CD4-positive, alpha-beta T cell (primary cell): ENCODE measurements at regions of chr10 and their contacts with region 1.

Region 1: GRCh38 chr10:22655311-22655981 is 58.9 kb downstream of the PIP4K2A start:
- DNase-seq: peak in 12 of 14 experiments; percentile 17 to 81 (median 51)
- ATAC-seq: peak; percentile 74
- H3K4me3 ChIP-seq: peak overlapping the region; percentile 27
- H3K4me3 Mint-ChIP-seq: peak overlapping the region; percentile 82
- H3K27ac ChIP-seq: peak overlapping the region; percentile 58 to 67
- H3K27ac Mint-ChIP-seq: peak overlapping the region; percentile 91
- H3K4me1 ChIP-seq: peaks cover 92% of the 10 kb centered on the region
- H3K4me1 Mint-ChIP-seq: peaks cover 96% of the 10 kb centered on the region
- H3K27me3 ChIP-seq: no peaks in the 10 kb centered on the region
- H3K27me3 Mint-ChIP-seq: no peaks in the 10 kb centered on the region
- CTCF ChIP-seq: no peak

Region 2: GRCh38 chr10:22624289-22624738 is 31.1 kb before region 1 on chr10:
- CTCF ChIA-PET with region 1: interaction called, 5 read pairs
- POLR2A ChIA-PET with region 1: interaction called, 24 read pairs
- intact Hi-C with region 1: no loop called
- DNase-seq: no peak
- ATAC-seq: peak; percentile 64
- H3K4me3 ChIP-seq: no peak overlapping the region
- H3K4me3 Mint-ChIP-seq: peak overlapping the region; percentile 55
- H3K27ac ChIP-seq: peak overlapping the region in 1 of 2 donors; percentile 62
- H3K27ac Mint-ChIP-seq: peak overlapping the region; percentile 90
- H3K4me1 ChIP-seq: peaks cover 66% of the 10 kb centered on the region
- H3K4me1 Mint-ChIP-seq: peaks cover 98% of the 10 kb centered on the region
- H3K27me3 ChIP-seq: no peaks in the 10 kb centered on the region
- H3K27me3 Mint-ChIP-seq: no peaks in the 10 kb centered on the region
- CTCF ChIP-seq: no peak

Region 3: DNA sequence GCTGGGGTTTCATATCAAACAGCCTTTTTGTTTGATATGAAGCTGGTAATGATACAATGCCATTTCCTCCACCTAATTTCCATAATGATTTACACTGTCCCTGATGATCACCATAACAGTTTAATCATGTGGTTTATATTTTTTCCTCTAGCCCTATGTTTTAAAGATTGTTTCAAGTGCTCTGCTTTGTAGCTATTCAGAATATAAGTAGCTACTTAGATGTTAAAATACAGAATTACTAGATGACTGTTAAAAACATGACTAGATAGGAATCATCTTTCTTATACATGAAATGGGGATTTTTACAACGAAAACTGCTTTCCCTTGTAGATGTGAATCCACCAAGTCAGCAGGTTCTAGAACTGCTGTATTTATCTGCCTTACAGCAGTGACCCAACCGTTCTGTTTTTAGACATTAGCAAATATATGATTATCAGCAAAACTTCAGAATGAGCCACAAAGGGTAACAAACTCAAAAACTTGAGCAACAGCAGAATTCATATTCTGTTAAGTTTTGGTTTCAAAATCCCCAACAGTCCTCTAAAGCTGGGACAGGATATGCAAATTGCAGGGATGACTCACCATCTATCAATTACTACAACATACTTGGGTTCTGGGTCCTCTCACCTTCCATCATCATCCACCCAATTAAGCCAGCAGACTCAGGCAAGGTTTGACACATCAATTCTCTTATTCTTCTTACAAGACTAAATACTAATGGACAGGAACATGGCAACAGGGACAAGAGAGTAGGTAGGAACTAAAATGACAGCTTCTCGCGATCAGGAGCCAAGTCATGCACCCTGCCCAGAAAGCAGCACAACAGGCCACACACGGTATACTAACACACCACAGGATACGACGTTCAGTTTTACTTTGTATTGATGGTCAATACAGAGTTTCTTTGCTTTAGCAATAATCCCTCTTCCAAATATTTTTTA is 24.9 kb before region 1 on chr10:
- CTCF ChIA-PET with region 1: interaction called, 5 read pairs
- POLR2A ChIA-PET with region 1: interaction called, 24 read pairs
- intact Hi-C with region 1: loop called in 1 of 2 experiments (anchors 1 kb)
- DNase-seq: peak in 4 of 14 experiments; percentile 55 to 89 (median 86)
- ATAC-seq: peak; percentile 87
- H3K4me3 ChIP-seq: peak overlapping the region; percentile 42
- H3K4me3 Mint-ChIP-seq: peak overlapping the region; percentile 63
- H3K27ac ChIP-seq: peak overlapping the region; percentile 82 to 87
- H3K27ac Mint-ChIP-seq: peak overlapping the region; percentile 90
- H3K4me1 ChIP-seq: peaks cover 67% of the 10 kb centered on the region
- H3K4me1 Mint-ChIP-seq: peaks cover 99% of the 10 kb centered on the region
- H3K27me3 ChIP-seq: no peaks in the 10 kb centered on the region
- H3K27me3 Mint-ChIP-seq: no peaks in the 10 kb centered on the region
- CTCF ChIP-seq: no peak

Region 4: DNA sequence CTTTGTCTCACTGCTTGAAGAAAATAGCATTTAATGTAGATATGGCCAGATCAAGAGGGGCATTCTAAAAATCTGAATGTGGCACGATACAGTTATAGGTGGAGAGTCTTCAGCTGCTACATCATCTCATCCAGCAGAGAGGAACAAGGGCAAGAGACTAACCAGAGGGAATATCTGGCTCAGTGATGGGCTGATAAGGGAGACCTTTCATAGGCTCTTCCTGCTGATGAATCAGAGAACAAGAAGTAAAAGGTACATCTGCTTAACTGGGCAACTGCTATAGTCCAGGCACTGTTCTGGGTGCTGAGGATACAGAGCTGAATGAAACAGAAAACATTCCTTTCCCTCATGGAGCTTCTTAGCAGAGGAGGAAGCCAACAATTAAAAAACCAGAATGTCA is 21.0 kb after region 1 on chr10:
- CTCF ChIA-PET with region 1: interaction called, 7 read pairs
- POLR2A ChIA-PET with region 1: interaction called, 157 read pairs
- intact Hi-C with region 1: no loop called
- DNase-seq: no peak
- ATAC-seq: no peak
- H3K4me3 ChIP-seq: no peak overlapping the region
- H3K4me3 Mint-ChIP-seq: peak overlapping the region; percentile 52
- H3K27ac ChIP-seq: peak overlapping the region in 1 of 2 donors; percentile 18
- H3K27ac Mint-ChIP-seq: peak overlapping the region; percentile 99
- H3K4me1 ChIP-seq: peaks cover 68% of the 10 kb centered on the region
- H3K4me1 Mint-ChIP-seq: peaks cover 99% of the 10 kb centered on the region
- H3K27me3 ChIP-seq: no peaks in the 10 kb centered on the region
- H3K27me3 Mint-ChIP-seq: no peaks in the 10 kb centered on the region
- CTCF ChIP-seq: no peak